Lower leg skin (tissue), 4 donors: ENCODE measurements at regions of chr2 and their contacts with region 1.

Region 1: GRCh38 chr2:223929571-223930102 is 15.5 kb downstream of the WDFY1 start:
- DNase-seq: no peak
- H3K4me3 ChIP-seq: no peak overlapping the region
- CTCF ChIP-seq: no peak
- POLR2A ChIP-seq: no peak

Region 2: GRCh38 chr2:223759569-223760442 is 169.8 kb before region 1 on chr2:
- intact Hi-C with region 1: loop called (anchors 5 kb)
- DNase-seq: no peak
- H3K4me3 ChIP-seq: no peak overlapping the region
- CTCF ChIP-seq: no peak
- POLR2A ChIP-seq: no peak